ENCODE measurements at regions of chr5 and their contacts with region 1.

Region 1: GRCh38 chr5:148374692-148375360 is 8.9 kb upstream of the FBXO38 start:
- DNase-seq: peak; percentile 75 to 77
- H3K4me3 ChIP-seq: no peak overlapping the region
- H3K4me3 Mint-ChIP-seq: no peak overlapping the region
- H3K27ac Mint-ChIP-seq: no peak overlapping the region
- H3K4me1 ChIP-seq: no peaks in the 10 kb centered on the region
- H3K4me1 Mint-ChIP-seq: peaks cover 10% of the 10 kb centered on the region
- H3K27me3 ChIP-seq: no peaks in the 10 kb centered on the region
- H3K27me3 Mint-ChIP-seq: no peaks in the 10 kb centered on the region
- CTCF ChIP-seq: peak; percentile 83 to 93

Region 2: DNA sequence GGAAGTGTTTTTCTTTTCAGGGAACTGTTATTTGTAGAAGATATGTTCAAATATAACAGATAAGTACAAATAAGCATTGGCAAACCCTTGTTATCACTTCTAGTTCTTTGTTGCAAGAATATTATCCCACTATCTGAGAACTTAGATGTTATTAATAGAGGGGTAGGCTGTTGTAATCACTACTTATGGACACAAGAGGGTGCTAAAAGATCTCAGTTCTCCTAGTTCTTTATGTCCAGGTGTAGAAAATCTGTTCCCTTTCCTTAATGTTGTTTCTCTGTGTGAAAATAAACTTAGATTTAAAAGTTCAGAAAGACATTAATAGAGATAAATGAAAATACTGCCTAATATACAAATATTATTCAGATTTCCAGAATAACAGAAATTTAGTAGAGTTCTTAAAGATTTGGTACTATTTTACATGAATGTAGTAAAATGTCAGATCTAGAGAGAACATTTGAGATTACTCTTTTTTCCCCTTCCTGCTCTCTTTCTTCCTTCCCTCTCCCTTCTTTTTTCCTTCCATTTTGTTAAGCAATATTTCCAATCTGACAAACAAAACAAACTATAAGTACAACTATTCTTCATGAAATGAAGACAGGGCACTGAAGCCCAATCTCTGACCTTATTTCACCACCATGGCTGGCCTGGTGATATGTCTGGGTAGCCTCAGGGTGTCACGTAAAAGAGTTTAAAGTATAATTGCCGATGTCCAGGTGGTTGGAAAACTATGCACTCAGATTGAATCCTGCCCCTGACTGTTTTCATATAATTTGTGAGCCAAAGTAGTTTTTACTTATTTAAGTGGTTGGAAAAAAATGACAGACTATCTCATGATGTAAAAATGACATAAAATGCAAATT is 424.9 kb before region 1 on chr5:
- CTCF ChIA-PET with region 1: no interaction called
- POLR2A ChIA-PET with region 1: no interaction called
- intact Hi-C with region 1: loop called (anchors 1 kb)
- DNase-seq: peak in 1 of 2 experiments; percentile 36
- H3K4me3 ChIP-seq: no peak overlapping the region
- H3K4me3 Mint-ChIP-seq: no peak overlapping the region
- H3K27ac Mint-ChIP-seq: no peak overlapping the region
- H3K4me1 ChIP-seq: no peaks in the 10 kb centered on the region
- H3K4me1 Mint-ChIP-seq: peaks cover 6% of the 10 kb centered on the region
- H3K27me3 ChIP-seq: no peaks in the 10 kb centered on the region
- H3K27me3 Mint-ChIP-seq: no peaks in the 10 kb centered on the region
- CTCF ChIP-seq: peak; percentile 66 to 67

Region 3: DNA sequence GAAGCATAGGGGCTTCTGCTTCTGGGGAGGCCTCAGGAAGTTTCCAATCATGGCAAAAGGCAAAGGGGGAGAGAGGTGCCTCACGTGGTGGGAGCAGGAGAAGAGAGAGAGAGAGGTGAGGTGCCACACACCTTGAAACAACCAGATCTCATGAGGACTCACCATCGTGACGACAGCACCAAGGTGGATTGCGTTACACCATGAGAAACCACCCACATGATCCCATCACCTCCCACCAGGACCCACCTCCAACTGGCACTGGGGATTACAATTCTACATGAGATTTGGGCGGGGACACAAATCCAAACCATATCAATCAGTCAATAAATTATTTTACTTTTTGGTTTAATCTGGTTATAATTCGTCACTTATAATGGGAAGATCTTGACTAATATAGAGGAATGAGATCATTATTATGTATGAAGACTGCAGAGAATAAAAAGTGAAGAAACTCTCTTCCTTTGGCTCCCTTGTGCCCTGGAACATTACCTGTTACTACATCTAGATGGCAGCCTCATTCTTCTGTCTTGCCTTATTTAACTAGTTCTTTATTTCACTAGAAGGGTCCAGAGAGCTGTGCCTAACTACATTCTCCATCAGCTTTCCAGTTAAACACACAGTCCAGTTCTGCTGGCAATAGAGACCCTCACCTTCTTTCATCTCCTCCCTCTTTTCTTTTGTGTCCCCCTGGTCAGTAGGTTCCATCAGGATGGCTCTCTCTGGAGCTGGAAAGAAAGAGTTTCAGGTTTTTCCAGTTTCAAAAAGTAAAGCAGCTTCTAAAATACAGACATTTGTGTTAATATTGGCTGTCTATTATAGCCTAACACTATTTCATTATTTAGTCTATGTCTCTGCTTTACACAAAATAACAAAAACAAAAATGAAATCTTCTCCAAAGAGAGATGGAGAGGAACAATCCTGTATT is 84.3 kb before region 1 on chr5:
- CTCF ChIA-PET with region 1: interaction called, 12 read pairs
- POLR2A ChIA-PET with region 1: no interaction called
- intact Hi-C with region 1: loop called (anchors 1 kb)
- DNase-seq: peak in 1 of 2 experiments; percentile 19
- H3K4me3 ChIP-seq: no peak overlapping the region
- H3K4me3 Mint-ChIP-seq: no peak overlapping the region
- H3K27ac Mint-ChIP-seq: no peak overlapping the region
- H3K4me1 ChIP-seq: no peaks in the 10 kb centered on the region
- H3K4me1 Mint-ChIP-seq: no peaks in the 10 kb centered on the region
- H3K27me3 ChIP-seq: no peaks in the 10 kb centered on the region
- H3K27me3 Mint-ChIP-seq: peaks cover 8% of the 10 kb centered on the region
- CTCF ChIP-seq: peak; percentile 52 to 54

Region 4: GRCh38 chr5:148314204-148314603 is 60.6 kb before region 1 on chr5:
- CTCF ChIA-PET with region 1: interaction called, 6 read pairs
- POLR2A ChIA-PET with region 1: no interaction called
- intact Hi-C with region 1: loop called (anchors 2 kb)
- DNase-seq: no peak
- H3K4me3 ChIP-seq: no peak overlapping the region
- H3K4me3 Mint-ChIP-seq: no peak overlapping the region
- H3K27ac Mint-ChIP-seq: no peak overlapping the region
- H3K4me1 ChIP-seq: no peaks in the 10 kb centered on the region
- H3K4me1 Mint-ChIP-seq: no peaks in the 10 kb centered on the region
- H3K27me3 ChIP-seq: no peaks in the 10 kb centered on the region
- H3K27me3 Mint-ChIP-seq: peaks cover 3% of the 10 kb centered on the region
- CTCF ChIP-seq: no peak

Measured in Caco-2 (cell line).